Adrenal gland (tissue), 19 donors: ENCODE measurements at regions of chr3 and their contacts with region 1.

Region 1: DNA sequence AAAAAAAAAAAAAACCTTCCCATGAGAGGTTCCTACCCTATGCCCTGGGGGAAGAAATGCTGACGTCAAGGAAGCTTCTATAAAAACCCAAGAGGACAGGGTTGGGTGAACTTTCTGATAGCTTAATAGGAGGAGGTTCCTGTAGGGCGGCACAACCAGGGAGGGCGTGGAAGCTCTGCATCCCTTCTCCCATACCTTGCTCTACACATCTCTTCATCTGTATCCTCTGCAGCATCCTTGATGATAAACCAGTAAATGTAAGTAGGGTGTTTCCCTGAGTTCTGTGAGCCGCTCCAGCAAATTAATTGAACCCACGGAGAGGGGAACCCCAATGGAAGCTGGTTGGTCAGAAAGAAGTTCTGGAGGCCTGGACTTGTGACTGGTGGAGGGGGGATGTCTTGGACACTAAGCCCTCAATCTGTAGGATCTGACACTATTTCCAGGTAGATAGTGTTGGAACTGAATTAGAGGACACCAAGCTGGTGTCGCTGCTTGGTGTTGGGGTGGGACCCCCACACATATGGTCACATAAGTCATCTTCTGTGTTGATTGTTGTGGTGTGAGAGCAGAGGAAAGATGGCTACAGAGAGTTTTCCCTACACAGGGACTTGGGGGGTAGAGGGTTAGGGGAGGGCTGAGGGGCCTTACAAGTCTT is 91.5 kb downstream of the ST6GAL1 start:
- DNase-seq: peak in 1 of 7 donors; percentile 6
- H3K4me3 ChIP-seq: no peak overlapping the region
- H3K27ac ChIP-seq: no peak overlapping the region
- H3K4me1 ChIP-seq: peaks cover 0 to 9% of the 10 kb centered on the region in 2 donors
- H3K27me3 ChIP-seq: no peaks in the 10 kb centered on the region
- CTCF ChIP-seq: no peak
- POLR2A ChIP-seq: no peak

Region 2: GRCh38 chr3:186839874-186840641 is 181.8 kb before region 1 on chr3:
- intact Hi-C with region 1: loop called in 1 of 2 experiments (anchors 5 kb)
- DNase-seq: peak in 1 of 7 donors; percentile 17
- H3K4me3 ChIP-seq: no peak overlapping the region
- H3K27ac ChIP-seq: no peak overlapping the region
- H3K4me1 ChIP-seq: no peaks in the 10 kb centered on the region
- H3K27me3 ChIP-seq: no peaks in the 10 kb centered on the region
- CTCF ChIP-seq: no peak
- POLR2A ChIP-seq: no peak